Activated B cell treated with CpG ODN at 0.5 μM for 24 hours (primary cell): ENCODE measurements at regions of chr10 and their contacts with region 1.

Region 1: GRCh38 chr10:124601431-124602120 is 140.0 kb downstream of the LHPP start:
- DNase-seq: peak; percentile 75
- ATAC-seq: peak; percentile 86
- H3K4me3 Mint-ChIP-seq: peak overlapping the region; percentile 70
- H3K27ac Mint-ChIP-seq: peak overlapping the region; percentile 94
- H3K4me1 Mint-ChIP-seq: peaks cover 97% of the 10 kb centered on the region
- H3K27me3 Mint-ChIP-seq: no peaks in the 10 kb centered on the region
- CTCF ChIP-seq: no peak

Region 2: GRCh38 chr10:124340033-124340760 is 261.4 kb before region 1 on chr10:
- CTCF ChIA-PET with region 1: no interaction called
- POLR2A ChIA-PET with region 1: no interaction called
- intact Hi-C with region 1: no loop called
- DNase-seq: no peak
- ATAC-seq: no peak
- H3K4me3 Mint-ChIP-seq: no peak overlapping the region
- H3K27ac Mint-ChIP-seq: no peak overlapping the region
- H3K4me1 Mint-ChIP-seq: peaks cover 17% of the 10 kb centered on the region
- H3K27me3 Mint-ChIP-seq: no peaks in the 10 kb centered on the region
- CTCF ChIP-seq: no peak

Region 3: DNA sequence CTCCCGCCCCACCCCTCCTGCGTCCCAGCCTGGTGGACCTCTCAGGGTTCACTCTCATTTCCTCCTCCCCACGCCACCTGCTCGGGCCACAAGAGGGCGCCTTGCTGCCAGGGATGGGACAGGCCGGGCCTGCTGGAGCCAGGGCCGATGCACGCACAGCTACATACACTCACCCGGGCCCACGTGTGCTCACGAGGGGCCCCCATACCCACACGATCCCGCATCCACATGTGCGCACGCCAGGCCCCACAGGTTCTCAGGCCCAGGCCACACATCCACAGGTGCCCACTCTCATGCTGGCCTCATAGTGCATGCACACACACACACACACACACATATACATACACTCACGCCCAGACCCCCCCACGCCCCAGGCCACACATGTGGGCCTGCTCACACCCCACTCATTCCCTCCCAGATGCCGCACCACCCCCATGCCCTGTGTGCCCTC is 71.3 kb before region 1 on chr10:
- CTCF ChIA-PET with region 1: interaction called, 4 read pairs
- POLR2A ChIA-PET with region 1: interaction called, 64 read pairs
- intact Hi-C with region 1: loop called (anchors 1 kb)
- DNase-seq: peak; percentile 86
- ATAC-seq: peak; percentile 91
- H3K4me3 Mint-ChIP-seq: no peak overlapping the region
- H3K27ac Mint-ChIP-seq: peak overlapping the region; percentile 71
- H3K4me1 Mint-ChIP-seq: peaks cover 56% of the 10 kb centered on the region
- H3K27me3 Mint-ChIP-seq: no peaks in the 10 kb centered on the region
- CTCF ChIP-seq: no peak

Region 4: GRCh38 chr10:124565565-124566256 is 35.9 kb before region 1 on chr10:
- CTCF ChIA-PET with region 1: no interaction called
- POLR2A ChIA-PET with region 1: interaction called, 15 read pairs
- intact Hi-C with region 1: no loop called
- DNase-seq: no peak
- ATAC-seq: peak; percentile 30
- H3K4me3 Mint-ChIP-seq: no peak overlapping the region
- H3K27ac Mint-ChIP-seq: no peak overlapping the region
- H3K4me1 Mint-ChIP-seq: peaks cover 54% of the 10 kb centered on the region
- H3K27me3 Mint-ChIP-seq: no peaks in the 10 kb centered on the region
- CTCF ChIP-seq: no peak

Region 5: DNA sequence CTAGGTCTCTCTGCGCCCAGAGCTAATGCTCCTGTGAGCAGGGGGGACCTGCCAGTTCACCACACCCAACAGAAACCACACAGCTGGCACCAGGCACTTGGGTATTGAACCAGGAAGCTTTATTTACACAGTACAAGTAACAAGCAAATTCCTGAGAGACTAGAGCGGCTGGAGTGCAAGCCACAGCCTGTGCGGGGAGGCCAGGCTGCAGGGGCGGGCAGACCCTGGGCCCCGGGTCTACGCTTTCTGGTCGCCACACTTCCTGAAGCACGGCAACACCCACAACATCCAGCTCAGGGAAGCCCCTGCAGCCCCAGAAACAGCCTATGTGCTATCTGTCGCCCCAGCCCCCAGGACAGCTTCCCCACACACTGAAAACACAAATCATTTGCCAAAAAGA is 17.6 kb after region 1 on chr10:
- CTCF ChIA-PET with region 1: no interaction called
- POLR2A ChIA-PET with region 1: interaction called, 207 read pairs
- intact Hi-C with region 1: loop called (anchors 1 kb)
- DNase-seq: no peak
- ATAC-seq: peak; percentile 72
- H3K4me3 Mint-ChIP-seq: peak overlapping the region; percentile 69
- H3K27ac Mint-ChIP-seq: peak overlapping the region; percentile 96
- H3K4me1 Mint-ChIP-seq: peaks cover 99% of the 10 kb centered on the region
- H3K27me3 Mint-ChIP-seq: no peaks in the 10 kb centered on the region
- CTCF ChIP-seq: no peak

Region 6: GRCh38 chr10:124697830-124698544 is 96.4 kb after region 1 on chr10:
- CTCF ChIA-PET with region 1: no interaction called
- POLR2A ChIA-PET with region 1: interaction called, 18 read pairs
- intact Hi-C with region 1: no loop called
- DNase-seq: peak; percentile 44
- ATAC-seq: peak; percentile 45
- H3K4me3 Mint-ChIP-seq: peak overlapping the region; percentile 69
- H3K27ac Mint-ChIP-seq: peak overlapping the region; percentile 96
- H3K4me1 Mint-ChIP-seq: peaks cover 100% of the 10 kb centered on the region
- H3K27me3 Mint-ChIP-seq: no peaks in the 10 kb centered on the region
- CTCF ChIP-seq: no peak

Region 7: GRCh38 chr10:124975977-124976514 is 374.5 kb after region 1 on chr10:
- CTCF ChIA-PET with region 1: no interaction called
- POLR2A ChIA-PET with region 1: no interaction called
- intact Hi-C with region 1: no loop called
- DNase-seq: no peak
- ATAC-seq: no peak
- H3K4me3 Mint-ChIP-seq: no peak overlapping the region
- H3K27ac Mint-ChIP-seq: no peak overlapping the region
- H3K4me1 Mint-ChIP-seq: peaks cover 7% of the 10 kb centered on the region
- H3K27me3 Mint-ChIP-seq: no peaks in the 10 kb centered on the region
- CTCF ChIP-seq: no peak